Activated CD4-positive, alpha-beta memory T cell treated with anti-CD3 and anti-CD28 coated beads for 36 hours (primary cell): ENCODE measurements at regions of chr9 and their contacts with region 1.

Region 1: DNA sequence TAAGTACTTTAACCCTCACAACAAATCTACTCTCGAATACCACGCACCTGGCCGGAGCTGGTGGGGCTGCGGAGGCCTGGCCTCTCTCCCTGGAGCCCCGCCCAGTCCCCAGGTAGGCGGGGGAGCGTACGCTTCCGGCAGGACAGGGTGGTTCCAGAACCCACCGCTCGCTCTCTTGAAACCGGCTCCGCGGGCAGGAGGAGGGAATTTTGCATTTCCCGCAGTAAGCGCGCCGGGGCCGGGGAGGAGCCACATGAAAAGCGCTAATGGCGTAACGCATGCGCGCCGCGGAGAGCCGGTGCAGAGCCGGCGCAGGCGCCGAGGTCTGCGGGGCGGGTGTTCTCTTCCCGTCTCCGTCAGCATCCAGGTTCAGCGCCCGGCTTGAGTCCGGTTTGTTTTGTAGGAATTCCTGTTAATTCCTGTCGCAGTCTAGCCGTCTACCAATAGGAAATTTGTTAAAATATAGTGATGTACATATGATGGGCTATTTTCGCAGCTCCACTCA is 20.8 kb downstream of the CAVIN4 start:
- DNase-seq: peak; percentile 86
- H3K4me3 Mint-ChIP-seq: peak overlapping the region; percentile 68
- H3K27ac Mint-ChIP-seq: no peak overlapping the region
- H3K4me1 Mint-ChIP-seq: peaks cover 20% of the 10 kb centered on the region
- H3K27me3 Mint-ChIP-seq: no peaks in the 10 kb centered on the region

Region 2: DNA sequence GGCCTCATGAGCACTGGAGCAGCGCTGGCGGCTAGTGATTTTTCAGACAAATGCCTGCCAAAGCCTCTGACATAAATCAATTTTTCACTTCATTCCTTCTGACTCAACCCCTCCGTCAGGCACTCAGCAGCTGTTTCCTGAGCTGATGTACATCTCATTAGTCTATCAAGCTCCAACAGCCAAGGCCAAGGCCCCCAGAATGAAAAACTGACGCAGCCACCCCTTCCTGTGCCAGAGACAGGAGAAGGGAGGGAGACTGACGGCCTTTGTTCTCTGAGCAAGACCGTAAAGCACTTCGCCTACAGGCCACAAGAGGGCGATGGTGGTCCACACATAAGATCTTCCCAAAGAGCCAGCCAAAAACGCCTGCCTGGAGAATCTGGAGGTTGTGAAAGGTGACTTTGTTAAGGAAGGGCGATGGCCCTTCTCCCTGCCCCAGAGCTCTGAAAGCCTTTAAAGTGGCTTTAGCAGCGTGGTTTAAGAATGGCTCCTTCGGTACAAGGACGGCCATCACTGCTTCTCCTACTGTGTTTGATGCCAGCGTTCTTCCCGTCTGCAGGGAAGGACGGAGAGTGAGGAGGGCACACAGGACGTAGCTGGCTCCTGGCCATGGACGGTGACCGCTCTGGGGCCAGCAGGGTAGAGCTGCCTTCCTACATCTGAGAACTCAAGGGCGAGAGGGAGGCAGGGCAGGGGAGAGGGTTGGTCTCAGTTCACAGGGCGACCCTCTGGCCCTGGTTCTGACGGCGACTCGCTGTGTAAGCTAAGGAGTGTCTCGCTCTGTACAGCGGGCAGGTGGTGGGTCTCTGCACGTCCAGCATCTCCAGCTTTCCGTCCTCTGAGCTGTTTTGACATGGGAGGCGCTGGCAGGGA is 1414.0 kb before region 1 on chr9:
- CTCF ChIA-PET with region 1: no interaction called
- POLR2A ChIA-PET with region 1: no interaction called
- intact Hi-C with region 1: loop called (anchors 10 kb)
- DNase-seq: peak; percentile 86
- H3K4me3 Mint-ChIP-seq: no peak overlapping the region
- H3K27ac Mint-ChIP-seq: no peak overlapping the region
- H3K4me1 Mint-ChIP-seq: peaks cover 33% of the 10 kb centered on the region
- H3K27me3 Mint-ChIP-seq: no peaks in the 10 kb centered on the region

Region 3: GRCh38 chr9:100098887-100099721 is 499.6 kb before region 1 on chr9 and contains the starts of genes ERP44 and INVS:
- CTCF ChIA-PET with region 1: no interaction called
- POLR2A ChIA-PET with region 1: no interaction called
- intact Hi-C with region 1: loop called (anchors 5 kb)
- DNase-seq: peak; percentile 98
- H3K4me3 Mint-ChIP-seq: peak within 1 kb of the TSS; percentile 98
- H3K27ac Mint-ChIP-seq: peak within 1 kb of the TSS; percentile 83
- H3K4me1 Mint-ChIP-seq: peaks cover 32% of the 10 kb centered on the region
- H3K27me3 Mint-ChIP-seq: no peaks in the 10 kb centered on the region
- total RNA-seq, gene ERP44: 14.5 to 14.8 TPM
- total RNA-seq, gene INVS: 10.5 to 12.1 TPM

Region 4: GRCh38 chr9:100352727-100353505 is 245.8 kb before region 1 on chr9 and contains the start of gene TEX10:
- CTCF ChIA-PET with region 1: interaction called, 4 read pairs
- POLR2A ChIA-PET with region 1: no interaction called
- intact Hi-C with region 1: loop called (anchors 2 kb)
- DNase-seq: peak; percentile 92
- H3K4me3 Mint-ChIP-seq: peak within 1 kb of the TSS; percentile 87
- H3K27ac Mint-ChIP-seq: peak within 1 kb of the TSS; percentile 69
- H3K4me1 Mint-ChIP-seq: peaks cover 44% of the 10 kb centered on the region
- H3K27me3 Mint-ChIP-seq: no peaks in the 10 kb centered on the region
- total RNA-seq, gene TEX10: 20.3 to 20.7 TPM

Region 5: DNA sequence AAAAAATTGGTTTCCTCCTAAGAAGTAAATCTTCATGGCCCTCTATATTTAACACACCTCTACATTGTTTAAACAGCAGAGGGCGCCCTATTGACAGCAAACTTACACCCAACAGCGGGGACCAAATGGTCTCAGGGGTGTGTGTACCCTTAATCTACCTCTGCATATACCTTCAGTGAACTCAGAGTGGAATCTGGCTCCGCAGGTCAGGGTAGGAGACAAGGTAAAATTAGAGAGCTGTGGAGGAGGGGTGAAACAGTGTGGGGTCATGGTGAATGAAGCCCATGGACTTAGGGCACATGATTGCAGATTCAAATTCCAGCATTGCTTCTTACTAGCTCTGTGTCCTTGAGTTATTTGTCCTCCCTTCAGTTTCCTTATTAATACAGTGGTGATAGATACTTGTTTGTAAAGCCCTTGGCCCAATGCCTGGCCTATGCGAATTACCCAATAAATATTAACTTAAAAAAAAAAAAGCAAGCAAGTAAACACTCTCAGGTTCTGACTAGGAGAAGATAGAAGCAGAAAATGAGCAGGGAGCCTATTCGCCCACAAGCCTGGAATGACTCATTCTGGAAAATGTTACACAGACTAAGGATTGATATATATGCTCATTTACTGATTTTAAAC is 102.1 kb after region 1 on chr9:
- CTCF ChIA-PET with region 1: no interaction called
- POLR2A ChIA-PET with region 1: no interaction called
- intact Hi-C with region 1: loop called (anchors 5 kb)
- DNase-seq: no peak
- H3K4me3 Mint-ChIP-seq: no peak overlapping the region
- H3K27ac Mint-ChIP-seq: no peak overlapping the region
- H3K4me1 Mint-ChIP-seq: no peaks in the 10 kb centered on the region
- H3K27me3 Mint-ChIP-seq: no peaks in the 10 kb centered on the region

Region 6: DNA sequence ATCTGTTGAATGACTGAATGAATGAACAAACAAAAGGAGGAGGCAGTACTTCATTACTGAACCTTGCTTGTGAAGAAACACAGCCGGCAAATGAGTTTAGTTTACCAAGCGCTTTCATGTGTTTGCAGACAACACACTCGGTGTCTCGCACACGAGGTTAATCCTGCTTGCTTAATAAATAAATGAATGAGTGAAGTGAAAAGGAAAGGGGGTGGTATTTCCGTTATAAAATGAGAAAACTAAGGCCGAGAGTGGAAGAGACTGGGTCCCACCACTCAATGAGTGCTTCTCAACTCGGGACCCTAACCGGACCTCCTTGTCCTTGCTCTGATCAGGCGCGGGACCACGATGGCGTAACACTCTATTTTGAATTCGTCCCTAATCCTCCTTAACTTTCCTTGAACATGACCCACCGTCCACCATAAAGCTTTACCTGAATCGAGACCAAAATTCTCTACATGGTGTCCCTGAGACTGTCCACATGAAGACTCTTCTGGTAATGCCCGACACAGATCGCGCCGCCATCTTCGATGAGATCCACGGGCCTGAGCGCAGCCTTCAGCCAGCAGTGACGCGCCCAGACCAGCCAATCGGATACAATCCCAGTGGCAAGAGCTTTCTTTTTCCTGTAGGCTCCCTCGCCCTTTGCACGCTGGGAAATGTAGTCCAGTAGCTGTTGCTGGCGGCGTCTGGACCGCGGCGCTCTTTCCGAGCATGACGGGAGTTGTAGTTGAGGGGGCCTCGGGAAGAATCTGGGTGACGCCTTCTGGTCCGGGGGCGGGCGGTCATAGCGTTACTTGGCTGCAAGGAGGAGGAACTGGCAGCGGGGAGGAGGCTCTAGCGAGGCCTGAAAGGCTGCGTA is 799.6 kb after region 1 on chr9 and contains the starts of genes MRPL50 and ZNF189:
- CTCF ChIA-PET with region 1: no interaction called
- POLR2A ChIA-PET with region 1: no interaction called
- intact Hi-C with region 1: loop called (anchors 5 kb)
- DNase-seq: peak; percentile 98
- H3K4me3 Mint-ChIP-seq: peak within 1 kb of the TSS; percentile 100
- H3K27ac Mint-ChIP-seq: peak within 1 kb of the TSS; percentile 98
- H3K4me1 Mint-ChIP-seq: peaks cover 68% of the 10 kb centered on the region
- H3K27me3 Mint-ChIP-seq: no peaks in the 10 kb centered on the region
- total RNA-seq, gene MRPL50: 13.3 to 13.4 TPM
- total RNA-seq, gene ZNF189: 10.2 to 10.6 TPM